Naive thymus-derived CD4-positive, alpha-beta T cell (primary cell): ENCODE measurements at regions of chr20 and their contacts with region 1.

Region 1: DNA sequence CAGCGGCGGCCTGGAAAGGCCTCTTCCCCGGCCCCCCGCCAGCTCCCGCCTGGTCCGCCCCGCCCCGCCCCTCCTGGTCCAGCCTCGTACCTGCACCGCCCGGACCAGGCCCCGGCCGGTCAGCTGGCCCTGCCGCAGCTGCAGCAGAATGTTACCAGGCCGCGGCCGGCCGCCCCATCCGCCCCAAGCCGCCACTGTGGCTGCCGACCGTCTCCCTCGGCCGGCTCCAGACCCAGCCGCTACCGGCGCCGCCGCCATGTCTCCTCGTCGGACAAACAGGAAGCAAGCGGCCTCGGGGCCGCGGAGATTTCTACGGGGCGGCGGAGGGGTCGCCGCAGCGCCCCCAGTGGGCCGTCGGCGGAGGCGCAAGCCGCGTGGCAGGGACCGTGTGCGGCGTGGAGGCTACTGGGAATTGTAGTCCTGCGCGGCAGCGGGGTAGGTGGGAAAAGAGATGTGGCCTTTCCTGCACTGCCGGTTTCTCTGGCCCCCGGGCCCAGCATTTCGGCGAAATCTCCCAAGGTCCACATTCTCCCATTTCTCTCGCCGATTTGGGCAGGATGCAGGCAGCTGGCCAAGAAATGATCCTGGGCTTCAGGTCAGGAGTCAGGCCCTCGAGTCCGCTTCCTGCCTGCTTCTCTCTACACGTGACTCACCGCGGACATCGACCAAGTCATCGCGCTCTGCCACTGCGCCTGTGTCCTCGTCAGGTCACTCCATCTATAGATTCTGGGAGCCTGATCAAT is at the start of gene TRPC4AP:
- DNase-seq: peak; percentile 83 to 90 (median 87)
- ATAC-seq: peak; percentile 99
- H3K4me3 ChIP-seq: peak within 1 kb of the TSS; percentile 77
- H3K4me3 Mint-ChIP-seq: peak within 1 kb of the TSS; percentile 87 to 98 (median 90)
- H3K27ac ChIP-seq: peak within 1 kb of the TSS; percentile 89
- H3K27ac Mint-ChIP-seq: peak within 1 kb of the TSS; percentile 81 to 98 (median 94)
- H3K4me1 ChIP-seq: peaks cover 15 to 22% of the 10 kb centered on the region in 2 donors
- H3K4me1 Mint-ChIP-seq: peaks cover 27 to 54% (median 51%) of the 10 kb centered on the region in 7 donors
- H3K27me3 ChIP-seq: no peaks in the 10 kb centered on the region
- H3K27me3 Mint-ChIP-seq: no peaks in the 10 kb centered on the region
- total RNA-seq, gene TRPC4AP: 50.5 to 66.0 (median 60.6) TPM

Region 2: DNA sequence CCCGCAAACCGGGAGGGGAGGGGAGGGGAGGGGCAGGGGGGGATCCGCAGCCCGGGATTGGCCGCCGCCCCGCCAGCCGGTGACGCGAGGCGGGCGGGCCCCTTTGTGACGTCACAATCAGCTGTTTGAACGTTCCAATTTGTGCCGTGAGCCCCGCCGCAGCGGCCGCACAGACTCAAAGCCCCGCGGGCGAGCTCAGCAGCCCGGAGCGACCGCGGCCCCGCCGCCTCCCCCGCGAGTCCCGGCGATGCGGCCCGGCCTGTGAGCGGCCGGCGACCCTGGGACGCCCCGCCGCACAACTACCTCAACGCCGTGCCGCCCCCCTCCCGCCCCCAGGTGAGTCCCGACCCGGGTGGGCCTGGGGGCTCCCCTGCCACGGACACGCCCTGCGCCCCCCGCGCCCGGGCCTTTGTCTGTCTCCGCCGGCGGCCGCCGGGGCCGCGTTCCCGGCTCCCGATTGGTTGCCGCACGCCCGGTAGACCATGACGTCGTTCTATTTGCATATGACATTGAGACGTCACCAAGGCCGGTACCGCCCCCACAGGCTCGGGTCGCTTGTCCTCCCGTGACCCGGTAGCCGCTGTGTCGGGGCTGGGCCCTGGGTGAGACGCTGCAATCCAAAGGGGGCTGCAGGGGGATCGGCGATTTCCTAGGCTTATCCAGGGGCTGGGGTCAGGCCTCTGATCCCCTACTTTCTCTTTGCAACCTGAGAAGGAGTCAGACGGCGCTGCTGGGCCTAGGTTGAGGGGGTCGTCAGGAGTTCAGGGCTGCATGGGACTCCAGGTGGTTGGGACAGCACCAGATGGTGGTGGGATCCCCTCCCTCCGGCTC is 388.3 kb before region 1 on chr20 and contains the start of gene TP53INP2:
- CTCF ChIA-PET with region 1: interaction called, 3 read pairs
- POLR2A ChIA-PET with region 1: no interaction called
- intact Hi-C with region 1: loop called in 1 of 2 experiments (anchors 5 kb)
- DNase-seq: peak; percentile 82 to 93 (median 87)
- ATAC-seq: peak; percentile 78
- H3K4me3 ChIP-seq: peak within 1 kb of the TSS; percentile 59
- H3K4me3 Mint-ChIP-seq: peak within 1 kb of the TSS; percentile 91 to 98 (median 94)
- H3K27ac ChIP-seq: peak within 1 kb of the TSS; percentile 94
- H3K27ac Mint-ChIP-seq: peak within 1 kb of the TSS; percentile 79 to 100 (median 97)
- H3K4me1 ChIP-seq: peaks cover 6 to 7% of the 10 kb centered on the region in 2 donors
- H3K4me1 Mint-ChIP-seq: peaks cover 15 to 39% (median 25%) of the 10 kb centered on the region in 7 donors
- H3K27me3 ChIP-seq: no peaks in the 10 kb centered on the region
- H3K27me3 Mint-ChIP-seq: peaks cover 0 to 25% (median 6%) of the 10 kb centered on the region in 5 donors
- total RNA-seq, gene TP53INP2: 1.2 to 41.4 (median 1.5) TPM

Region 3: DNA sequence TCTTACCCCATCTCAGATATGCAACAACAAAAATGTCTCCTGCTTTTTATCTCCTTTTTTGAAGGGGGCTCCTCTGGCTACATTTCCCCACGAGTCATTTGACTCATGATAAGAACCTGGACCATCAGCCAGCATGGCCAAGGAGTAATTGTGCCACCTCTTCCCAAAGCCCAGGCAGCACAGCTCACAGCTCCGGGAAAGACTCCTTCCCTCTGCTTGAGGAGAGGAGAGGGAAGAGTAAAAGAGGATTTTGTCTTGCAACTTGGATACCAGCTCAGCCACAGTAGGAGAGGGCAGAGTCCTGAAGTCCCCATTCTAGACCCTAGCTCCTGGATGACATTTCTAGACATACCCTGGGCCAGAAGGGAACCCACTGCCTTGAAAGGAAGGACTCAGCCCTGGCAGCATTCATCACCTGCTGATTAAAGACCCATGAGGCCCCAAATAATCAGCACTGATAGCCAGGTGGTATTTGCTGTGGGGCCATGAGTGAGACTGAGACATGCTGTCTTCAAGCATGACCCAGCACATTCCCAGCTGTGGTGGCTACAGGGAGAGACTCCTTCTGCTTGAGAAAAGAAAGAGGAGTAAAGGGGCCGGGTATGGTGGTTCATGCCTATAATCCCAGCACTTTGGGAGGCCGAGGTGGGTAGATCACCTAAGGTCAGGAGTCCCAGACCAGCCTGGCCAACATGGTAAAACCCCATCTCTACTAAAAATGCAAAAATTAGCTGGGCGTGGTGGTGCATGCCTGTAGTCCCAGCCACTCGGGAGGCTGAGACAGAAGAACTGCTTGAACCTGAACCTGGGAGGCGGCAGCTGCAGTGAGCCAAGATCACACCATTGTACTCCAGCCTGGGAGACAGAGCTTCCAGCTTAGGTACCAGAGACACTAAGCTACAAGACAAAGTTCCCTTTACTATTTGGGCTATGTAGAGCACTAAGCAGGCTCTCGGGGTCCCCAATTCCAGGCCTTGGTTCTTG is 295.4 kb before region 1 on chr20:
- CTCF ChIA-PET with region 1: no interaction called
- POLR2A ChIA-PET with region 1: no interaction called
- intact Hi-C with region 1: no loop called
- DNase-seq: no peak
- ATAC-seq: no peak
- H3K4me3 ChIP-seq: no peak overlapping the region
- H3K4me3 Mint-ChIP-seq: no peak overlapping the region
- H3K27ac ChIP-seq: no peak overlapping the region
- H3K27ac Mint-ChIP-seq: no peak overlapping the region
- H3K4me1 ChIP-seq: peaks cover 0 to 9% of the 10 kb centered on the region in 2 donors
- H3K4me1 Mint-ChIP-seq: peaks cover 7 to 67% (median 59%) of the 10 kb centered on the region in 7 donors
- H3K27me3 ChIP-seq: no peaks in the 10 kb centered on the region
- H3K27me3 Mint-ChIP-seq: no peaks in the 10 kb centered on the region

Region 4: GRCh38 chr20:34876162-34877001 is 216.3 kb before region 1 on chr20 and contains the start of gene ACSS2:
- CTCF ChIA-PET with region 1: interaction called, 10 read pairs
- POLR2A ChIA-PET with region 1: interaction called, 3 read pairs
- intact Hi-C with region 1: loop called (anchors 1 kb)
- DNase-seq: peak; percentile 88 to 99 (median 92)
- ATAC-seq: peak; percentile 91
- H3K4me3 ChIP-seq: peak within 1 kb of the TSS; percentile 87
- H3K4me3 Mint-ChIP-seq: peak within 1 kb of the TSS; percentile 78 to 99 (median 90)
- H3K27ac ChIP-seq: peak within 1 kb of the TSS; percentile 74
- H3K27ac Mint-ChIP-seq: peak within 1 kb of the TSS; percentile 68 to 96 (median 88)
- H3K4me1 ChIP-seq: peaks cover 35 to 43% of the 10 kb centered on the region in 2 donors
- H3K4me1 Mint-ChIP-seq: peaks cover 47 to 79% (median 72%) of the 10 kb centered on the region in 7 donors
- H3K27me3 ChIP-seq: no peaks in the 10 kb centered on the region
- H3K27me3 Mint-ChIP-seq: no peaks in the 10 kb centered on the region
- total RNA-seq, gene ACSS2: 37.3 to 51.7 (median 43.3) TPM

Region 5: DNA sequence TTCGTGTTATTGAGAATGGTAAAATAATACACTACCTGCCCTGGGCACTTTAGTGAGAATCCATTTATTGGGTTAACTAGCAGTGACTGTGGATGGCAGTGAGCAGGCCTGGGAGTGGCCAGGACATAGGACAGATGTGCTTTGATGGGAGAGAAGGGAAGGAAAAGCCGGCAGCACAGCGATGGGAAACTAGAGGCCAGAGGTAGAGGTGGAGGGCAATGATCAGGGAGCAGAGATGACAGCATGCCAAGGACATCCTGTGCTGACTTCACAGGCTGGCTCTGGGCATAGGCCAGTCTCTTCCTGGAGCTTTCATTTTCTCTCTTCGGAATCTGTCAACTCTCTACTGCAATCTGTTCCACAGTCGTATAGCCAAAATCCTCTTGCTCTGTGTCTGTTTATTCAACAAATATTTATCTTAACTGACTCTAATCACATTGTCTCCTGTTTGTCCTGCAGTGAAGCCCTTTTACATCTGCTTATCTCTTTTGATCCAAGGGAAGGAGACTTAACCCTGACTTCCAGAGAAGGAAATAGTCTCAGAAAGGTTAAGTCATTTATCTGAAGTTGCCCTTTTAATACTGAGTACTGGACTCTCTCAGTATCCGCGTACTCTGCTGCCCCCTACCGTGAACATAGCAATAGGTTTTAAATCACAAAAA is 115.4 kb after region 1 on chr20:
- CTCF ChIA-PET with region 1: interaction called, 16 read pairs
- POLR2A ChIA-PET with region 1: no interaction called
- intact Hi-C with region 1: loop called (anchors 1 kb)
- DNase-seq: peak; percentile 46 to 75 (median 64)
- ATAC-seq: peak; percentile 96
- H3K4me3 ChIP-seq: no peak overlapping the region
- H3K4me3 Mint-ChIP-seq: no peak overlapping the region
- H3K27ac ChIP-seq: no peak overlapping the region
- H3K27ac Mint-ChIP-seq: no peak overlapping the region
- H3K4me1 ChIP-seq: no peaks in the 10 kb centered on the region
- H3K4me1 Mint-ChIP-seq: no peaks in the 10 kb centered on the region
- H3K27me3 ChIP-seq: no peaks in the 10 kb centered on the region
- H3K27me3 Mint-ChIP-seq: no peaks in the 10 kb centered on the region

Region 6: DNA sequence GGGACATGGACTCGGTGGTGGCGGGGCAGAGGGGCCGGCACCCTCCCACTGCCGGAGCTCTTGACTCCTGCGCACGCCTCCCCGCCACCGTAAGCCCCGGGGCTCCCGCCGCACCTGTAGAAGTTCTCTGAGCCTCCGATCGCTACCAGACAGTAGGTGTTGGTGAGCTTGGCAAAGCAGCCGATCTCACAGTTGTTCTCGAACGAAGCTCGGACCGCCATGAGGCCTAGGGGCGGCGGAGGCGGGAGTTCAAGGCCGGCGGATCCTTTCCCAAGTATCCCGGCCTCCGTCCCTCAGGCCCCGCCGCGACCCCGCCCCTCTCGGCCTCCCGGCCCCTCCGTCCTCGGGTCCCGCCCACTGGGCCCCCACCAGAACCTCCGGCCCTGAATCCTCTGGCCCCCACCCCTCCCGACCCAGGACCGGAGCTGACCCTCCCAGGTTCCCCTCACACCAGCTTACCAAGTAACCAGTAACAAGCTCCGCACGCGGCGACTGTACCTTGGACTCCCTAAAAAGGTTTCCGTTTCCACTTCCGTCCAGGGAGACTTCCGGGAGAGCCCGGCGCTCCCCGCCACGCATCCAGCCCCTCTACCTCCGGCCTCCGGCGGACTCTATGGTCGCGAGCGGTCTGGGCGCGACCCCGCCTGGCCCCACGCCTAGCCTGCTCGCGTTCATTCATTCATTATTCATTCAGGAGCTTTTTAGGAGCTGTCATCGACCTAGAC is 191.7 kb after region 1 on chr20 and contains the start of gene EIF6:
- CTCF ChIA-PET with region 1: no interaction called
- POLR2A ChIA-PET with region 1: interaction called, 4 read pairs
- intact Hi-C with region 1: loop called in 1 of 2 experiments (anchors 2 kb)
- DNase-seq: peak; percentile 23 to 78 (median 53)
- ATAC-seq: peak; percentile 80
- H3K4me3 ChIP-seq: peak within 1 kb of the TSS; percentile 56
- H3K4me3 Mint-ChIP-seq: peak within 1 kb of the TSS; percentile 71 to 96 (median 91)
- H3K27ac ChIP-seq: peak within 1 kb of the TSS; percentile 89
- H3K27ac Mint-ChIP-seq: peak within 1 kb of the TSS; percentile 79 to 94 (median 87)
- H3K4me1 ChIP-seq: peaks cover 7 to 8% of the 10 kb centered on the region in 2 donors
- H3K4me1 Mint-ChIP-seq: peaks cover 18 to 43% (median 30%) of the 10 kb centered on the region in 7 donors
- H3K27me3 ChIP-seq: no peaks in the 10 kb centered on the region
- H3K27me3 Mint-ChIP-seq: no peaks in the 10 kb centered on the region
- total RNA-seq, gene EIF6: 35.4 to 117 (median 39.9) TPM

Region 7: DNA sequence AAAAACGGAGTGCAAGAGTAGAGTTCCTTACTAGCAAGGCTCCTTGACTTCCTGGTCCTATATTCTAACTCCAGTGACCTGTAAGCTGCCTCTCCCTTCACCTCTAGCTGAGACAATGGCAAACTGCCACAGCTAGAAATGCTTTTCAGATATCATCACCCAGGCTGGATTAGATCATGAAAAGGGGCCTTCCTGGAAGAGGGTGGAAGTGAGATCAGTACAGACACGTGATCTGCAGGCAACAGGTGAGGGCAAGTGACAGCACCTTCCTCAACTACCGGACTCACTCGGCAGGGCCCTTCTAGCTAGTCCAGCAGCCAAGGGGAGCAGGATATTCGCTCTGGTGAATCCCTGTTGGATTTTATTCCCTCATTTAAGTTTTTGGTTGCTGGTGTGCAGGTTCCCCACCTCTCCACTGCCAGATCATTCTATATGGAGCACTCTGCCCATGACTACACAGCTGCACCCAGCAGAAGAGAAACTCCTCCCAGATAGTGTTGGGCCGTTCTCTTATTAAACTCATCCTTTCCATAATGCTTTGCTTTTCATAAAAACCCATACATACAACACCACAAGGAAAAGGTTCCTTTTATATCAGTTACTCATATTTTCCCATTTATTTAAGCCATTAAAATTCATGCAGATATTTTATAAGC is 225.9 kb after region 1 on chr20:
- CTCF ChIA-PET with region 1: no interaction called
- POLR2A ChIA-PET with region 1: no interaction called
- intact Hi-C with region 1: no loop called
- DNase-seq: no peak
- ATAC-seq: no peak
- H3K4me3 ChIP-seq: no peak overlapping the region
- H3K4me3 Mint-ChIP-seq: no peak overlapping the region
- H3K27ac ChIP-seq: no peak overlapping the region
- H3K27ac Mint-ChIP-seq: peak overlapping the region in 1 of 9 donors; percentile 58
- H3K4me1 ChIP-seq: peaks cover 0 to 5% of the 10 kb centered on the region in 2 donors
- H3K4me1 Mint-ChIP-seq: peaks cover 6 to 46% (median 13%) of the 10 kb centered on the region in 7 donors
- H3K27me3 ChIP-seq: no peaks in the 10 kb centered on the region
- H3K27me3 Mint-ChIP-seq: no peaks in the 10 kb centered on the region

Region 8: DNA sequence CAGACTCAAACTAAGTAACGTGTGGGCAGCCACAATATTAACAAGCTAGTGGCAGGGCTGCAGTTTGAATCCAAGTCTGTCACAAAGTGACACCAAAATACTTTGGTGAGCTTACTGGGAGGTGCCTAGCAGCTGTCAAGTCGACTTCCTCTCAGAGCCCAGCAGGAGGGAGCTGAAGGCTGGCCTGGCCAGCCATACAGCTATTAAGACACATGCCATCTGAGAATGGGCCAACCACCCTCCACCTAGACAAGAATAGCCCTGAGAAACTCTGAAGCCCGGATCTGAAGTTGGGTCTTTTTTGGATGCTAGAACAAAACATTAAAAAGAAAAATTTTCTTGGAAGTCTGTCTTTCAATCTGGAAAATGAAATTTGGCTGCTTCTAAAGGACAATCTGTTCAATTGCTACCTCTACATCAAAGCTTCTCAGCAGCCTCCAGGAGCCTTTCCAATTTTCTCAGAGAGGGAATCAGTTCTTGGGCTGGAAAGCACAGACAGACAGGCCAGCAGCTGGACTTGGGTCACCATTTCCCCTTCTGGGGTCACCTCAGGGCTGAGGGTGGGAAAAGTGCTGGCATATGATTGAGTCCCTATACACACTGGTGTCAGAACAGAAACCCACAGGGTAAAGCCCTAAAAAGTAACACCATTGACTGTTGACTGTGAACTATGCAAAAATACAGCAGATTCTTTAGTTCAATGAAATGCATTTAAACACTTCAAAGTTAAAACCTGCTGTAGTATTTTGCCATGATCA is 276.1 kb after region 1 on chr20:
- CTCF ChIA-PET with region 1: no interaction called
- POLR2A ChIA-PET with region 1: no interaction called
- intact Hi-C with region 1: no loop called
- DNase-seq: no peak
- ATAC-seq: no peak
- H3K4me3 ChIP-seq: no peak overlapping the region
- H3K4me3 Mint-ChIP-seq: no peak overlapping the region
- H3K27ac ChIP-seq: no peak overlapping the region
- H3K27ac Mint-ChIP-seq: no peak overlapping the region
- H3K4me1 ChIP-seq: no peaks in the 10 kb centered on the region
- H3K4me1 Mint-ChIP-seq: peaks cover 0 to 9% (median 3%) of the 10 kb centered on the region in 7 donors
- H3K27me3 ChIP-seq: no peaks in the 10 kb centered on the region
- H3K27me3 Mint-ChIP-seq: no peaks in the 10 kb centered on the region

Region 9: DNA sequence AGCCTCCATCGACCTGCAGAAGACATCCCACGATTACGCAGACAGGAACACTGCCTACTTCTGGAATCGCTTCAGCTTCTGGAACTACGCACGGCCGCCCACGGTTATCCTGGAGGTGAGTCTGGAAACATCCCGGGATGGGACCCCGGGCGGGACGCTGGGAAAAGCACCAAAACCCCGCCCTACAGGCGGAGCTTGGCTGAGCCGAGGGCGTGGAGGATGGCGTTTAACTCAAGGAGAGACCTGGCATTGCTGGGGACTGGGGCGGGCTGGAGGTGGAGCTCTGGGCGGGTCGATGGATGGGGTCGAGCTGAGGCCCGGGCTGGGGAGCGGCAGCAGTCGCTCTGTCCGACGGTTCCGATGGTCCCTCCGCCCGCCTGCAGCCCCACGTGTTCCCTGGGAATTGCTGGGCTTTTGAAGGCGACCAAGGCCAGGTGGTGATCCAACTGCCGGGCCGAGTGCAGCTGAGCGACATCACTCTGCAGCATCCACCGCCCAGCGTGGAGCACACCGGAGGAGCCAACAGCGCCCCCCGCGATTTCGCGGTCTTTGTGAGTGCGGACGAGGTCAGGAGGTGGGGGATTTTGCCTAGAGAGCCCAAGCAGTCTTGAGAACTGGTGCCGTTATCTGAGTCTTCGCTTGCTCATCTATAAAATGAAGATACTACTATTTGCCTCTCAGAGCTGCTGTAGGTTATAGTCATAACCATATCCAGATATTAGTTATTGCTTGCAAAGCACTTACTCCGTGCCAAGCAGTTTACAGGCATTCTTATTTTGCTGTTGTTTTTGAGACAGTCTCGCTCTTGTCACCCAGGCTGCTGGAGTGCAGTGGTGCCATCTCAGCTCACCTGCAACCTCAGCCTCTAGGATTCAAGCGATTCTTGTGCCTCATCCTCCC is 526.8 kb after region 1 on chr20:
- CTCF ChIA-PET with region 1: no interaction called
- POLR2A ChIA-PET with region 1: no interaction called
- intact Hi-C with region 1: loop called in 1 of 2 experiments (anchors 2 kb)
- DNase-seq: peak; percentile 54 to 84 (median 68)
- ATAC-seq: peak; percentile 31
- H3K4me3 ChIP-seq: peak overlapping the region; percentile 70
- H3K4me3 Mint-ChIP-seq: peak overlapping the region; percentile 87 to 98 (median 91)
- H3K27ac ChIP-seq: peak overlapping the region; percentile 27
- H3K27ac Mint-ChIP-seq: peak overlapping the region; percentile 62 to 90 (median 85)
- H3K4me1 ChIP-seq: peaks cover 16 to 28% of the 10 kb centered on the region in 2 donors
- H3K4me1 Mint-ChIP-seq: peaks cover 13 to 45% (median 34%) of the 10 kb centered on the region in 7 donors
- H3K27me3 ChIP-seq: no peaks in the 10 kb centered on the region
- H3K27me3 Mint-ChIP-seq: peaks cover 0 to 3% (median 0%) of the 10 kb centered on the region in 5 donors

Region 10: GRCh38 chr20:35718972-35719635 is 626.4 kb after region 1 on chr20:
- CTCF ChIA-PET with region 1: no interaction called
- POLR2A ChIA-PET with region 1: no interaction called
- intact Hi-C with region 1: no loop called
- DNase-seq: no peak
- ATAC-seq: no peak
- H3K4me3 ChIP-seq: no peak overlapping the region
- H3K4me3 Mint-ChIP-seq: no peak overlapping the region
- H3K27ac ChIP-seq: no peak overlapping the region
- H3K27ac Mint-ChIP-seq: peak overlapping the region in 1 of 9 donors; percentile 59
- H3K4me1 ChIP-seq: peaks cover 8 to 14% of the 10 kb centered on the region in 2 donors
- H3K4me1 Mint-ChIP-seq: peaks cover 23 to 69% (median 45%) of the 10 kb centered on the region in 7 donors
- H3K27me3 ChIP-seq: no peaks in the 10 kb centered on the region
- H3K27me3 Mint-ChIP-seq: no peaks in the 10 kb centered on the region